Heart right ventricle (tissue), 16 donors: ENCODE measurements at regions of chr14 and their contacts with region 1.

Region 1: DNA sequence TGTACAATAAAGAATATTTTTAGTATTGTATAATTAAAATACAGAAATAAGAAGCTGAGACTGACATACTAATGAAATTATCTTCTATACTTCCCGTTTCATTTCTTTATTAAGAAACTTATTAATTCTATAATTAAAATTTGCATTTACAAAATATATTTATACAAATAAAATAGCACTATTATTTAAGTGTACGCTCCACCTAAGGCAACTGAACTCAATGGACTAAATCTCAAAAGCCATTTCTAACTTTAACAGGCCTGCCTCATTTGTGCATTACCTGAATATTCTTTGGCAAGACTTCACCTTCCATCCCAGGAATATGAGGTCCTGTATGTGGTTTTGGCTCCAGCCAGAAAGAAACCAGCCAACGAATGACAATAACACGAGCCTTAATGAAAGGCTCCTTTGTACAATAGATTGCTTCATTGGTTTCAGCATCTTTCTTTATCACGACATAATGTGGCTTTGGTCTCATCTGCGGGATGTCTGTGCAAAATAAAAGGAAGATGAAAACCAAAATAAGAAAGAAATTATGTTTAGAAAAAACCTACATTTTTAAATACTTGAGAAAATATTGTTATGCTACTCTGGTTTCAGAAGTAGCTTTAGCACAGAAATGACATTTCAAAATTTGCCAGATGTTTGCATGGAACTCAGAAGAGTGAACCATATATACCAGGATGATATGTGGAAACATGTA is 58.7 kb downstream of the RALGAPA1 start:
- DNase-seq: no peak
- ATAC-seq: no peak
- H3K4me3 ChIP-seq: no peak overlapping the region
- H3K27ac ChIP-seq: no peak overlapping the region
- H3K4me1 ChIP-seq: no peaks in the 10 kb centered on the region
- H3K27me3 ChIP-seq: no peaks in the 10 kb centered on the region
- CTCF ChIP-seq: no peak

Region 2: GRCh38 chr14:35725930-35726329 is 24.4 kb before region 1 on chr14:
- intact Hi-C with region 1: loop called in 1 of 10 experiments (anchors 2 kb)
- DNase-seq: no peak
- ATAC-seq: no peak
- H3K4me3 ChIP-seq: no peak overlapping the region
- H3K27ac ChIP-seq: no peak overlapping the region
- H3K4me1 ChIP-seq: no peaks in the 10 kb centered on the region
- H3K27me3 ChIP-seq: no peaks in the 10 kb centered on the region
- CTCF ChIP-seq: no peak